GM10248 (cell line): ENCODE measurements at regions of chr9 and their contacts with region 1.

Region 1: GRCh38 chr9:35646533-35647265 is 4.0 kb downstream of the SIT1 start:
- DNase-seq: peak; percentile 94
- CTCF ChIP-seq: peak; percentile 98

Region 2: DNA sequence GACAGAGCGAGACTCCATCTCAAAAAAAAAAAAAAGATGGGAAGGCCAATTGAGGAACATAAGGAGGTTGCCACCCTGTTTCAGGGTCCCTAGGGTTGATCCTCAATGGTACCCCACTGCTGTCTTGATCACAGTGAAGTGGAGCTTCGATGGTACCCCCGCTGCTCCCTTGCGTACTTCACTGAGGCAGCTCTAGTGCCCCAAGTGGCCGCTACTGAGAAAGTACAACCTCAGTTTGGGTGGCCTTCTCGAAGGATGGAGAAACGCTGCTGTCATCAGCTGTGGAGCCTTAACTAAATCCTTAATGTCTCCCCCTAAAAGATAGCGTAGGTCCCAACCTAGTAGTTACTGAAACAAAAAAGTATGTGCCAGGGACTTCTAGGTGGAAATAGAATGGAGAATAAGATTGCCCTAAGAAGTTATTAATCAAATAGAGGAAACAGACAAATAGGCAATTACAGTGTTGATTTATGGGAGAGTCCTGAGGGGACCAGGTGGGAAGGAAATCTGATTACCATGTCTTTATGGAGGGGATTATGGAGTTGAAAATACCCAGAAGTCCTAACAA is 35.4 kb before region 1 on chr9:
- CTCF ChIA-PET with region 1: interaction called, 97 read pairs
- POLR2A ChIA-PET with region 1: interaction called, 3 read pairs
- DNase-seq: peak; percentile 46
- CTCF ChIP-seq: peak; percentile 70

Region 3: DNA sequence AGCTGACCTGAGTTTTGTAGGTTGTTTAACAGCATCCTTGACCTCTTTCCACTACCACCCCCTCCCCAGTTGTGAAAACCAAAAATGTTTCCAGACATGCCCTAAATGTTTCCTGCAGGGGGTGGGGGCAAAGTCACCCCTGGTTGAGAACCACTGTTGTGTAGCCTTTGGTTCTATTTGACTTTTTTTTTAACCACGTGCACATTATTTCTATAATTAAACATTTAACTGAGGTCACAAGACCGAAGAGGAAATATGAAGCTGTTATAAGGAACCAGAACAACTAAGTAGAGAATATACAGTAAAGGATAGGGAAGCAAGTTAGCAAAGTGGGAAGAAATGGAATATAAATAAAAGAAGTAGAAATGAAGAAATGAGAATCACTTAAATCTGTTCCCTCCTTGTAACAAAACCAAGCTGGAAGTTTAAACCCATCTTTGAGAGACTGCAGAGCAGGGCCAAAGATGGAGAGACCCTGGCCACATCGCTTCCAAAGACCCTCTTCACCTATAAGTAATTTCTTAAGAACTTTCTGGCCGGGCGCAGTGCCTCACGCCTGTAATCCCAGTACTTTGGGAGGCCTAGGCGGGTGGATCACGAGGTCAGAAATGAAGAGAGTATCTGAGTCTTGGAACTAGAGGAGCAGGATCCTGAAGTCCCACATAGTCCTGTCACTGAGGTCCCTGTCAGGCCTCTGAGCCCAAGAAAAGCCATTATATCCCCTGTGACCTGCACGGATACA is 10.4 kb before region 1 on chr9:
- CTCF ChIA-PET with region 1: interaction called, 36 read pairs
- POLR2A ChIA-PET with region 1: interaction called, 5 read pairs
- DNase-seq: no peak
- CTCF ChIP-seq: no peak

Region 4: DNA sequence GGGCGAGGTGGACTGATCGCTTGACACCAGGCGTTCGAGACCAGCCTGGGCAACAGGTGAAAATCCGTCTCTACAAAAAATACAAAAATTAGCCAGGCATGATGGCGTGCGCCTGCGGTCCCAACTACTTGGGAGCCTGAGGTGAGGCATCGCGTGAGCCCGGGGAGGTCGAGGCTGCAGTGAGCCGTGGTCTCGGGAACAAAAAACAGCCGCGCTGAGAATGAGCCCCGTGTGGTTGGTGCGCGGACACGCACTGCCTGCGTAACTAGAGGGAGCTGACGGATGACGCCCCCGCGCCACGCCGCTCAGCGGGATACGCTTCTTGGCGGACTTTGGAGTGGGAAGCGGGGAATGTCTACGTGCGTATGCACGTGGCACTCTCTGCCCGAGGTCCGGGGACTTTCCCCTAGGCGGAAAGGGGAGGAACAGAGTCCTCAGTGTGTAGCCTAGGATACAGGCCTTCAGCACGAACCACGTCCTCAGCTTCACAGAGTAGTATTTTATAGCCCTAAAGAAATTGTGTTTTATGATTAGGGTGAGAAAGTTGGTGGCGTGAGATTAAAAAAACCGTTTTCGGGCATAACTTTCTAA is 10.9 kb after region 1 on chr9 and contains the start of gene RMRP:
- CTCF ChIA-PET with region 1: interaction called, 138 read pairs
- POLR2A ChIA-PET with region 1: interaction called, 3 read pairs
- DNase-seq: peak; percentile 92
- CTCF ChIP-seq: no peak

Region 5: GRCh38 chr9:35882263-35882848 is 235.7 kb after region 1 on chr9:
- CTCF ChIA-PET with region 1: no interaction called
- POLR2A ChIA-PET with region 1: no interaction called
- DNase-seq: peak; percentile 78
- CTCF ChIP-seq: peak; percentile 97